Activated CD4-positive, alpha-beta T cell treated with anti-CD3 and anti-CD28 coated beads for 36 hours (primary cell): ENCODE measurements at regions of chr1 and their contacts with region 1.

Region 1: DNA sequence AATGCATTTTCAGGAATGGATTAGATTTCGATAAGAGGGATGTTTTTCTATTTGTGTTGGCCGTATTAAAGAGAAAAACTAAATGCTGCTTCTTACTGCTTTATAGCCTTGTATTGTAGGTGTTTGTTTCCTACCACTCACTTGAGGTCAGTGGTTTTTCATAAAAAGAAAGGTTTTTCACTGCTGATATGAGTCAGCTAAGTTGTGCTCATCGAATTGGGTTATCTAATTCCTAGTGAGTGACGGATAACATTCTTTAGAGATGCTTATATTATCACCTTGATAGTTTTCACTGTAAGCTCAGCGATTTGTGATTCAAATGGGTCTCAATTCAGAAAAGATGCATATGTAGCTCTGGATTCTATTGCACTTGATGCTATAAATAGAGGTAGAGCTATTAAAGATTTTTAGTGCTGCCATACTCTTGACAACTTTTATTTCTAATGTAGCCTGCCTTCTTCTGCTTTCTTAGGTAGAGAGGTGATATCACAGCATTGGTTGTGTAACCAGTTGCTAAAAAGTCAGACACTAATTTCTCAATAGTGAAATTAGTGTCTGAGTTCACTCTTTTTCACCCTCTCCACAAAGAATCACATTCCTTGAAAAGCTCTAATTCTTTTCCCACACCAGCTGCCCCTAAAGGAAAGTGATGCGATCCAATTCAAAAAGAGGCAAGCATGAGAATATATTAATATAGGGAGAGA is 180.0 kb downstream of the RASAL2 start:
- DNase-seq: no peak
- ATAC-seq: no peak
- H3K4me3 Mint-ChIP-seq: no peak overlapping the region
- H3K27ac Mint-ChIP-seq: no peak overlapping the region
- H3K4me1 Mint-ChIP-seq: no peaks in the 10 kb centered on the region
- H3K27me3 Mint-ChIP-seq: no peaks in the 10 kb centered on the region

Region 2: GRCh38 chr1:178258536-178258935 is 15.3 kb before region 1 on chr1:
- CTCF ChIA-PET with region 1: no interaction called
- POLR2A ChIA-PET with region 1: no interaction called
- intact Hi-C with region 1: loop called in 1 of 2 experiments (anchors 2 kb)
- DNase-seq: no peak
- ATAC-seq: no peak
- H3K4me3 Mint-ChIP-seq: no peak overlapping the region
- H3K27ac Mint-ChIP-seq: no peak overlapping the region
- H3K4me1 Mint-ChIP-seq: no peaks in the 10 kb centered on the region
- H3K27me3 Mint-ChIP-seq: no peaks in the 10 kb centered on the region

Region 3: DNA sequence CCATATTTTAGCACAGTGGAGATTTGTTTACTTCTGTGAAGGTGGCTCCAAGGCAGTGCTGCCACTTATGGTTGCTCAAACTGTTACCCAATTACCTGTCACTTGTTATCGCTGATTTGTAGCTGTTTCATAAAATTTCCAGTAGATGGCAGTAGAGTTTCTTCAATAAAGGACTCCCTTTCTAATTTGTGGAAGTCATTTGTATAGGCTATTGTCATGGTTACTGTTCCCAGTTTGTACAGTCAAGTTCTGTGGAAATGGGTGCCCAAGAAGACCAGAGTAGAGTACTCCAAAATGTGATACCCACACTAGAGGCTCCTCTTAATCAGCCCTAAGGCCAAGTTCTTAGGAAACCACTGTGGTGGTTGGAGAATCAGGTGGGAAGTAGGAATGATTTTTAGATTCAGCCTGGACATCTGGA is 36.8 kb after region 1 on chr1:
- CTCF ChIA-PET with region 1: no interaction called
- POLR2A ChIA-PET with region 1: no interaction called
- intact Hi-C with region 1: no loop called
- DNase-seq: no peak
- ATAC-seq: peak; percentile 49
- H3K4me3 Mint-ChIP-seq: no peak overlapping the region
- H3K27ac Mint-ChIP-seq: no peak overlapping the region
- H3K4me1 Mint-ChIP-seq: no peaks in the 10 kb centered on the region
- H3K27me3 Mint-ChIP-seq: peaks cover 8% of the 10 kb centered on the region